Activated CD8-positive, alpha-beta memory T cell treated with anti-CD3 and anti-CD28 coated beads, Interleukin-2, amount 10 ng/mL, durations not matched to agents 7 days and 5 days (primary cell): ENCODE measurements at regions of chr2 and their contacts with region 1.

Region 1: GRCh38 chr2:42095923-42096408 is 48.1 kb downstream of the PKDCC start:
- DNase-seq: peak; percentile 80
- ATAC-seq: peak; percentile 69
- H3K4me3 Mint-ChIP-seq: no peak overlapping the region
- H3K27ac Mint-ChIP-seq: no peak overlapping the region
- H3K4me1 Mint-ChIP-seq: peaks cover 28% of the 10 kb centered on the region
- H3K27me3 Mint-ChIP-seq: peaks cover 17% of the 10 kb centered on the region

Region 2: GRCh38 chr2:42008238-42008921 is 87.6 kb before region 1 on chr2:
- CTCF ChIA-PET with region 1: no interaction called
- DNase-seq: no peak
- ATAC-seq: no peak
- H3K4me3 Mint-ChIP-seq: no peak overlapping the region
- H3K27ac Mint-ChIP-seq: no peak overlapping the region
- H3K4me1 Mint-ChIP-seq: peaks cover 10% of the 10 kb centered on the region
- H3K27me3 Mint-ChIP-seq: peaks cover 36% of the 10 kb centered on the region

Region 3: DNA sequence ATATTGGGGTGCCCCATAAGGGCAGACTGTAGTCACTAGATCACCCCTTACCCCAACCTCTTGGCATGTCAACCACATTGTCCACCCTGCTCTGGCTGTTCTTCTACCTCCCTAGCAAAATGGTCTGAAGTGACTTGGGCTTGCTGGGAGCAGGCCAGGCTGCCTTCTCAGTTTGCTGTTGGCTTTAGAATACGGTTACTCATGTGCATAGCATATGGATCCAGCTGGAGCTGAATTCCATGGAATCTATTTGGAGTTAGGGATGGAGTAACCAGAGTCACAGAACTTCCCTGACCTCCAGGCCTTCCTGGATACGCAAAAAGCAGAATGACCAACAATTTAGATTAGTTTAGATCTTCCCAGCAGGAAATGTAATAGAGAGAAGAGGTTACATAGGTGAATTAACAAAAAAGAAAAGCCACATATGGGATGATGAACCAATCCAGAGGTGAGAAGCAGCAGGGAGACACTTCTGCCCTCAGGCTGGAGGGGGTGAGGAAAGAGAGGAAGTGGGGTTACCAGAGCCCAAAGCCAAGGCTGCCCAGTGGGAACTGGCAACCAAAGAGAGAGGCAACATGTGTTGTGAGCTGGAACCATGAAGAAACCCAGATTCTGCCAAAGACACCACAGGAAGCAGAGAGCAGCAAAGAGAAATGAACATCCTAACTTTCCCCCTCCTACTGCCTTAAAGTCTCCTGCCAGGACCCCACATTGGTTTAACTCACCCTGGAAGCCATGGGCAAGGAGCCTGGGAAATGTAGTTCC is 22.0 kb before region 1 on chr2:
- CTCF ChIA-PET with region 1: no interaction called
- DNase-seq: no peak
- ATAC-seq: no peak
- H3K4me3 Mint-ChIP-seq: no peak overlapping the region
- H3K27ac Mint-ChIP-seq: no peak overlapping the region
- H3K4me1 Mint-ChIP-seq: no peaks in the 10 kb centered on the region
- H3K27me3 Mint-ChIP-seq: peaks cover 17% of the 10 kb centered on the region

Region 4: DNA sequence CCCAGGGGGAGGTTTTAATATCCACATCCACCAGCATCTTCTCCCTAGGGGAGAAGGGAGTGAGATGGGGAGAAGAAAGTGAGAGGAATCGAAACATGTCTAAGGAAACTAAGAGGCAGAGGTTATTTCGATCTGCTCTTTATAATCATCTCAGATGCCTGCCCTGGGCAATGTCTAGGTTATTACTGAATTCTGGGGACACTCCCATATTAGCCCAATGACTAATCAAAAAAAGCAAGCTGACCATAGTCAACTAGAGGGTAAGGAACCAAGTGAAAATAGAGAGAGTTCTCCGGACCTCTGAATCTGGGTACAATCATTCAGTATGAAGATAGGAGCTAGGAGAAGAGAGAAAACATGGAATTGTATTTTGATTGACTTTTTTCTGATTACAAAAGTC is 16.5 kb after region 1 on chr2:
- CTCF ChIA-PET with region 1: no interaction called
- DNase-seq: no peak
- ATAC-seq: no peak
- H3K4me3 Mint-ChIP-seq: no peak overlapping the region
- H3K27ac Mint-ChIP-seq: no peak overlapping the region
- H3K4me1 Mint-ChIP-seq: peaks cover 8% of the 10 kb centered on the region
- H3K27me3 Mint-ChIP-seq: no peaks in the 10 kb centered on the region

Region 5: DNA sequence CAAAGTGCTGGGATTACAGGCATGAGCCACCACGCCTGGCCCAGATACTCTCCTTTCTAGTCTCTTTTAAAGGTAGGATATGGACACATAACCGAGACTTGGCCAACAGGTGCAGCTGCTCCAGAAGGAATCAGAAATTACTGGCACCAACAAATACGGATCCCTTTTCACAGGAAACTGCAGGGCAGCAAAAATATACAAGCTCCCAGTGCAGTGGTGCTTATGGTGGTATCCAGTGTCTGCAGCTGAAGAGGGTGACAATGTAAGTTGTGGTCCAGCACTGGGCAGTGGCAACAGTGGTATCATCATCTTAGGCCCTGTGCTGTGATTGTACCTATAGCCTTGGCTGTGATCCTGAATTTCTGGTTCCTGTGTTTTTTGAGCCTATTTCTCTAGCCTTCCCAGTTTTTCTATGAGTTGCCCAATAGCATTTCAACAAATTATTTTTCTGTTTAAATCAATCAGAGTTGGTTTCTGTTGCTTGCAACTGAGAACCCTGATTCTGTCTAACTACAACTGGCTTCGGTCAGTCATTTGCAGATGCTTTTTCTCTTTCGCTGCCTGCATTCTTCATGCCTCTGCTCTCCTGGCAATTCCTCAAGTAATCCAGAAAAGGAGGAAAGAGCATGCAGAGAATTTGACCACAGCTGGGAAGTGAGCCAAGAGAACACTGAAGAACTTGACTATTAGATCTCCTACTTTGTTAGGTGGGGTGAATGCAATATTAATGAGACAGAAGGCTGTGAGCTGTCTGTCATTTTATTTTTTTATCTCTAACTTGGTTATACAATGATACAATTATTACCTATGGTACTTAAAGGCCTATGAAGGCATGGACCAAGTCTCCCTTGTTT is 42.4 kb after region 1 on chr2:
- CTCF ChIA-PET with region 1: interaction called, 10 read pairs
- DNase-seq: no peak
- ATAC-seq: no peak
- H3K4me3 Mint-ChIP-seq: no peak overlapping the region
- H3K27ac Mint-ChIP-seq: peak overlapping the region; percentile 3
- H3K4me1 Mint-ChIP-seq: peaks cover 57% of the 10 kb centered on the region
- H3K27me3 Mint-ChIP-seq: no peaks in the 10 kb centered on the region

Region 6: GRCh38 chr2:42196403-42197267 is 100.7 kb after region 1 on chr2:
- CTCF ChIA-PET with region 1: interaction called, 25 read pairs
- DNase-seq: peak; percentile 52
- ATAC-seq: peak; percentile 80
- H3K4me3 Mint-ChIP-seq: no peak overlapping the region
- H3K27ac Mint-ChIP-seq: no peak overlapping the region
- H3K4me1 Mint-ChIP-seq: peaks cover 47% of the 10 kb centered on the region
- H3K27me3 Mint-ChIP-seq: no peaks in the 10 kb centered on the region

Region 7: DNA sequence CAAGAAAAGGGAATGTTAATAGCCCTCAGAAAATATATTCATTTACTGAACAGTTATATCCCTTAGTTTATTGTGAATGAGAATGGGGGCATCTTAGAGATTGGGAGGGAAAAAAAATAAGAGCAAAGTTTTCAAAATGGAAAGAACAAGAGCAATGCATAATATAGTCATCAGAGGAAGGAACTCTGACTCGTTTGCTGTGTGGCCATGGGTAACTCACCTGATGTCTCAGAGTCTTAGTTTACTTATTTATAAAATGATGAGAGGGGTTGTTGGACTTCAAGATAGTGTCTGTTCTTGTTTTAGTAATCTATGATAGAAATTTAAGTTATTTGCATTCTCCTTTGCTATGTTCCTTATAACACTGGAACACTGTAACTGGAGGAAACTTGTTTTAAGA is 143.8 kb after region 1 on chr2:
- CTCF ChIA-PET with region 1: interaction called, 19 read pairs
- DNase-seq: no peak
- ATAC-seq: no peak
- H3K4me3 Mint-ChIP-seq: no peak overlapping the region
- H3K27ac Mint-ChIP-seq: no peak overlapping the region
- H3K4me1 Mint-ChIP-seq: peaks cover 27% of the 10 kb centered on the region
- H3K27me3 Mint-ChIP-seq: no peaks in the 10 kb centered on the region

Region 8: GRCh38 chr2:42328148-42328833 is 232.3 kb after region 1 on chr2:
- CTCF ChIA-PET with region 1: interaction called, 24 read pairs
- DNase-seq: no peak
- ATAC-seq: no peak
- H3K4me3 Mint-ChIP-seq: no peak overlapping the region
- H3K27ac Mint-ChIP-seq: peak overlapping the region; percentile 12
- H3K4me1 Mint-ChIP-seq: peaks cover 16% of the 10 kb centered on the region
- H3K27me3 Mint-ChIP-seq: no peaks in the 10 kb centered on the region